Activated CD4-positive, alpha-beta T cell treated with anti-CD3 and anti-CD28 coated beads, Interleukin-2, amount 10 ng/mL, durations not matched to agents 24 days and 14 days (primary cell): ENCODE measurements at regions of chr10 and their contacts with region 1.

Region 1: DNA sequence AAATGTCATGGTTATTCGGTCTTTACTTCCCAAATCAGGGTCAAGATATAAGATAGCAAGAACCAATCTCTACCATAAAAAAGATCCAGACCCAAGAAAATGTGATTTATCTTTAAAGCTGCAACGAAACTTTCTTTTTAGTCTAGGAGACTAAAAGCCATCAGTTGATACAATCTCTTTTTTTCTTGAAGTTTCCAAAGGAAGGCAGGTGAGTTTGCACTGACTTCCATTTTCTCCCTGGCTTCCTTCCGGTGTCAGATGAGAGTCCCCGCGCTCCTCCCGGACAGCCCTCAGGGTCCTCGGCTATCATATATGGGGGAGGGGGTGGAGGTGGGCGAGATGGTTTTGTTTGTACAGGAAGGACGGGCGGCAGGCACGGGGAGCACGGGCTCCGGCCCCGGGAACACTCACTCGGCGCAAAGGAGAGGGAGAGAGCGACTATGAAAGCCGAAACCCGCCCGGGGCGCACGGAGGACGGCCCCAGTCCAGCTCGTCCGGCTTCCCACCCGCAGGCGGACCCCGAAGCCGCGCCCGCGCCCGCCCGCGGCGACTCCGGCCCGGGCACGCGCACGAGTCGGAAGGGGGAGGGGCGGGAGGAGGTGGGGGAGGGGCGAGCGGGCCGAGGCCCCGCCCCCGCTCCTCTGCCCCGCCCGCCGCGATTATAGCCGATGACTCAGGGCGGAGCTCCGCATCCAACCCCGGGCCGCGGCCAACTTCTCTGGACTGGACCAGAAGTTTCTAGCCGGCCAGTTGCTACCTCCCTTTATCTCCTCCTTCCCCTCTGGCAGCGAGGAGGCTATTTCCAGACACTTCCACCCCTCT is at the start of gene BAG3:
- DNase-seq: peak; percentile 93
- H3K4me3 Mint-ChIP-seq: peak within 1 kb of the TSS; percentile 99
- H3K27ac Mint-ChIP-seq: peak within 1 kb of the TSS; percentile 99
- H3K4me1 Mint-ChIP-seq: peaks cover 40% of the 10 kb centered on the region
- H3K27me3 Mint-ChIP-seq: no peaks in the 10 kb centered on the region
- total RNA-seq, gene BAG3: 27.7 and 29.1 TPM in 2 replicates

Region 2: DNA sequence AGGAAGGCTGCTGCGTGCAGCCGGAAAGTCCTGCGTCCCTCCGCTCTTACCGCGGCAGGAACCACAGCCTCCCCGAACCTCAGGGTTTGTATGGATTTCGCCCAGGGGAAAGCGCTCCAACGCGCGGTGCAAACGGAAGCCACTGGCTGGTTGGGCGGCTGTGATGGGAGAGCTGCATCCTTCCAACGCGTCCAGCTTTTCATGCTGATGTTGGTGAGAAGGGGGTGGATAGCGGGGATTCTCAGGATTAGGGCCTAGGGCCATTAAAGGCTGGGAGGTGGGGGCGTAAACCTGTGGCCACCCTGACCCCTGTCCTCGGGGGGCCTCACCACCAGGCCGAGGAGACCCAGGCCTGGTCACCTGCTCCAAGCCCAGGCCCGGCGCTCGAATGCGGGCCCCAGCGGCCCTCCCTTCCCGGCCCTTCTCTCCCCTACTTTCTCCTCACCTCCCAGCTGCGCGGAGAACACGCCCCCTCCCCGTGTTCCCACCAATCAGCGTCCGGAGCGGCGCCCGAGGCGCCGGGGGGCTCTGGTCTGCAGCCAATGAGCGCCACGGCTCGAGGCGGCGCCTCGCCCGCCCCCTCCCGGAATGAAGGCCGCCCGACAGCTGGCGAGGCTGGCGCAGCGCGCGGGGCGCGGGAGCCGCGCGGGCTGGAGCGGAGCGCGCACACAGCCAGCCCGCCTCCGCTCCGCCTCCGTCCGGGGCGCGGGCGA is 621.8 kb before region 1 on chr10:
- intact Hi-C with region 1: loop called (anchors 5 kb)
- DNase-seq: peak; percentile 94
- H3K4me3 Mint-ChIP-seq: peak overlapping the region; percentile 66
- H3K27ac Mint-ChIP-seq: no peak overlapping the region
- H3K4me1 Mint-ChIP-seq: peaks cover 20% of the 10 kb centered on the region
- H3K27me3 Mint-ChIP-seq: peaks cover 13% of the 10 kb centered on the region

Region 3: DNA sequence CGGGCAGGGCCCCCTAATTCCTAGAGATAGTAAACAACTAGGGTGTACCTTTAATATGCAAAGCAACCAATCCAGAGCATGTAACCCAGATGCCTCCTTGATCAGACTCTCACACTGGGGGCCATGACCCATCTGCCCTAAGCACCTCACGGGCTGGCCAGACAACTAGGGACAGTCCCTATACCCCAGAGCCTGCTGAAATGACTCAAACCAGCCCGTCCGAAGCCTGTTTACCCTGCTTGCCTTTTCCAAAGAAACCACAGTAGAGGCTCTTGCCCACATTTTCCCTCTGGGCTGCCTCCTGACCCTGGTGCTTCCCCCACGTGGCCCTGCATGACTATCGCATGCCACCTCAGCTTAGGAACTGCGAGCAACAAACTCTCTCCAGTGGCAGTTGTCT is 154.6 kb before region 1 on chr10:
- intact Hi-C with region 1: loop called (anchors 5 kb)
- DNase-seq: peak; percentile 79
- H3K4me3 Mint-ChIP-seq: peak overlapping the region; percentile 63
- H3K27ac Mint-ChIP-seq: peak overlapping the region; percentile 86
- H3K4me1 Mint-ChIP-seq: peaks cover 74% of the 10 kb centered on the region
- H3K27me3 Mint-ChIP-seq: no peaks in the 10 kb centered on the region

Region 4: DNA sequence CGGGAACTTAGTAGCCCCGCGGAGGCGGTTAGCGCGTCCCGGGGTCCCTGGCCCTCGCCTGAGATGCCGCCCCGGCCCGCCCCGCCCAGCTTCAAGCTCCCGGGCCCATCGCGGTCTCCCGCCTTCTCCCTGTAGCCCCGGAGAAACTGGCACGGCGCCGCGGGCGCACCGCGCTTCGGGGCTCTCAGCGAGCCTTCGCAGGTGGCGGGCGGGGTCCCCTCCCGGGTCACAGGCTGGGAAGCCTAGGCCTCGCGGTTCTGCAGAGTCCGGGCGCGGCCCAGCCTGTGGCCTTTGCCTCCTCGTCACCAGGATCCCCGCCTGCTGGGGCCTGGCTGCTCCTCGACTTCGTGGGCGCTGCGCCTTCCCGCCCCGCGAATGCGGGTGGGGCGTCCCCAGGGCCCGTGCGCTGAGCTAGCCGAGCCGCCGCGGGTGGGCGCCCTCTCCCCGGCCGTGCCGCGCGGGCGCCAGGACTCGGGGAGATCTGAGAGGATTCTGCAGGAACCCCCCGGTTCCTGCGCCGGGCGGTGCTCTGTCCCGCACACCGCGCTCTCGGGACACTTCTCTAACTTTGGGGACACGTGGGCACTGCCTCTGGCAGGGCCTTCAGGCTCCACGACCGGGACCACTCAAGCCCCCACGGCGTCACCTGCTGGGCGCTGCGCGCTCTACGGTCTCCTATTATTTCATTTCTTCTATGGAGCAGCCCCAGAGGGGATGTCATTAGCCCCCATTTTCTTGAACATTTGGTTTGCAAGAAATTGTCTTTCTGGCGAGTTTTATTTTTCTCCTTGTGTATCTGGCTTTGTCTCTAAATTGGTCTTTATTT is 107.7 kb before region 1 on chr10:
- intact Hi-C with region 1: loop called (anchors 2 kb)
- DNase-seq: peak; percentile 89
- H3K4me3 Mint-ChIP-seq: peak overlapping the region; percentile 79
- H3K27ac Mint-ChIP-seq: peak overlapping the region; percentile 91
- H3K4me1 Mint-ChIP-seq: peaks cover 35% of the 10 kb centered on the region
- H3K27me3 Mint-ChIP-seq: peaks cover 20% of the 10 kb centered on the region

Region 5: DNA sequence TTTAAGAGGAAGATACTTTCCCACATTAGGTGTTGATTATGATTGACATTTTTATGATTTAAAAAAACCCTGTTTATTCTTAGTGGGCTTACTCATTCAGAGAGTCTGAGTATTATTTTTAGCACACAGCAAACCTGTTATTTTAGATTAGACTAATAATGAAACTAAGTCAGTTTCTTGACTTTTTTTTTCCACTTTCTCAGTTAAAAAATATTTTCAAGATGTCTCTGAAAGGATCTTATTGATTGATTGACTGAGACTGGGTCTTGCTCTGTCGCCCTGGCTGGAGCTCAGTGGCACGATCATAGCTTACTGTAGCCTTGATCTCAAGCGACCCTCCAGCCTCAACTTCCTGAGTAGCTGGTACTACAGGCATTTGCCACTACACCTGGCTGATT is 54.5 kb after region 1 on chr10:
- intact Hi-C with region 1: loop called (anchors 2 kb)
- DNase-seq: peak; percentile 72
- H3K4me3 Mint-ChIP-seq: peak overlapping the region; percentile 75
- H3K27ac Mint-ChIP-seq: peak overlapping the region; percentile 99
- H3K4me1 Mint-ChIP-seq: peaks cover 56% of the 10 kb centered on the region
- H3K27me3 Mint-ChIP-seq: no peaks in the 10 kb centered on the region